B cell (primary cell): ENCODE measurements at regions of chr2 and their contacts with region 1.

Region 1: GRCh38 chr2:237572021-237572741 is 5.8 kb downstream of the PRLH start:
- DNase-seq: peak; percentile 87
- ATAC-seq: peak; percentile 93
- H3K4me3 ChIP-seq: no peak overlapping the region
- H3K4me3 Mint-ChIP-seq: no peak overlapping the region
- H3K27ac ChIP-seq: no peak overlapping the region
- H3K27ac Mint-ChIP-seq: no peak overlapping the region
- H3K4me1 ChIP-seq: peaks cover 0 to 7% of the 10 kb centered on the region in 2 donors
- H3K4me1 Mint-ChIP-seq: peaks cover 6% of the 10 kb centered on the region
- H3K27me3 ChIP-seq: peaks cover 0 to 14% (median 2%) of the 10 kb centered on the region in 4 experiments
- H3K27me3 Mint-ChIP-seq: peaks cover 36% of the 10 kb centered on the region
- CTCF ChIP-seq: peak; percentile 98

Region 2: DNA sequence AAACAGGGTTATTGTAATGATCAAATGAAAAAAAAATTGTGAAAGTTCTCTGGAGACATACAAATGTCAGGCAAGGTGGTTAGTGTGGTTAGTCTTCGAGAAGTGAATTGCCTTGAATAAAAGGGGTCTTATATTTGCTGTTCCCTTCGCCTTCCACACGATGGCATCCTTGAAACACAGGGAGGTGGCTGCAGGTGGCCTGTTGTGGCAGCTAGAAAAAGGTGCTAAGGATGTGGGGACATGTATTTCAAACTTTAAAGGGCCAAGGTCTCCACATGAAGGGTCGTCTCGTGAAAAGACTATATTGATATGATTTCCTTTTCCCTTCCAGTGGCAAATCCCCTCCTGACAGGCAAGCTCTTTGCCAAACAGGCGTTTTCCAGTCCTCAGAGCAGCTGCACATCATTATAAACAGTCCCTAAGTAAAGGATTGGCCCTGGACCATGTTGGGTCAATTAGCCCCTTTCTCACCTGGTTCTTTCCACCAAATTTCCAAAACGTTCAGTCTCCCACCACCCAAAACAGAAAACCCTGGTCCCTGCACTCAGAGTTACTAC is 418.0 kb before region 1 on chr2:
- CTCF ChIA-PET with region 1: interaction called, 10 read pairs
- POLR2A ChIA-PET with region 1: no interaction called
- intact Hi-C with region 1: no loop called
- DNase-seq: peak; percentile 35
- ATAC-seq: no peak
- H3K4me3 ChIP-seq: no peak overlapping the region
- H3K4me3 Mint-ChIP-seq: no peak overlapping the region
- H3K27ac ChIP-seq: no peak overlapping the region
- H3K27ac Mint-ChIP-seq: no peak overlapping the region
- H3K4me1 ChIP-seq: no peaks in the 10 kb centered on the region
- H3K4me1 Mint-ChIP-seq: peaks cover under 1% of the 10 kb centered on the region
- H3K27me3 ChIP-seq: no peaks in the 10 kb centered on the region
- H3K27me3 Mint-ChIP-seq: peaks cover 13% of the 10 kb centered on the region
- CTCF ChIP-seq: peak; percentile 57

Region 3: GRCh38 chr2:237474931-237475703 is 97.1 kb before region 1 on chr2:
- CTCF ChIA-PET with region 1: interaction called, 7 read pairs
- POLR2A ChIA-PET with region 1: no interaction called
- intact Hi-C with region 1: loop called (anchors 1 kb)
- DNase-seq: peak; percentile 84
- ATAC-seq: peak; percentile 88
- H3K4me3 ChIP-seq: peak overlapping the region; percentile 12 to 91 (median 71)
- H3K4me3 Mint-ChIP-seq: peak overlapping the region; percentile 87
- H3K27ac ChIP-seq: peak overlapping the region; percentile 47 to 80
- H3K27ac Mint-ChIP-seq: peak overlapping the region; percentile 82
- H3K4me1 ChIP-seq: peaks cover 11 to 15% of the 10 kb centered on the region in 2 donors
- H3K4me1 Mint-ChIP-seq: peaks cover 11% of the 10 kb centered on the region
- H3K27me3 ChIP-seq: peaks cover 0 to 21% (median 15%) of the 10 kb centered on the region in 4 experiments
- H3K27me3 Mint-ChIP-seq: peaks cover 32% of the 10 kb centered on the region
- CTCF ChIP-seq: peak; percentile 92

Region 4: GRCh38 chr2:237556773-237557632 is 15.2 kb before region 1 on chr2:
- CTCF ChIA-PET with region 1: interaction called, 19 read pairs
- POLR2A ChIA-PET with region 1: no interaction called
- intact Hi-C with region 1: no loop called
- DNase-seq: no peak
- ATAC-seq: no peak
- H3K4me3 ChIP-seq: no peak overlapping the region
- H3K4me3 Mint-ChIP-seq: no peak overlapping the region
- H3K27ac ChIP-seq: no peak overlapping the region
- H3K27ac Mint-ChIP-seq: no peak overlapping the region
- H3K4me1 ChIP-seq: no peaks in the 10 kb centered on the region
- H3K4me1 Mint-ChIP-seq: no peaks in the 10 kb centered on the region
- H3K27me3 ChIP-seq: peaks cover 0 to 9% (median 0%) of the 10 kb centered on the region in 4 experiments
- H3K27me3 Mint-ChIP-seq: peaks cover 34% of the 10 kb centered on the region
- CTCF ChIP-seq: no peak

Region 5: GRCh38 chr2:237603718-237604362 is 31.7 kb after region 1 on chr2:
- CTCF ChIA-PET with region 1: interaction called, 20 read pairs
- POLR2A ChIA-PET with region 1: no interaction called
- intact Hi-C with region 1: no loop called
- DNase-seq: peak; percentile 87
- ATAC-seq: peak; percentile 96
- H3K4me3 ChIP-seq: peak overlapping the region in 4 of 5 experiments; percentile 20 to 41 (median 39)
- H3K4me3 Mint-ChIP-seq: peak overlapping the region; percentile 81
- H3K27ac ChIP-seq: peak overlapping the region; percentile 75 to 90
- H3K27ac Mint-ChIP-seq: peak overlapping the region; percentile 90
- H3K4me1 ChIP-seq: peaks cover 19 to 21% of the 10 kb centered on the region in 2 donors
- H3K4me1 Mint-ChIP-seq: peaks cover 26% of the 10 kb centered on the region
- H3K27me3 ChIP-seq: no peaks in the 10 kb centered on the region
- H3K27me3 Mint-ChIP-seq: no peaks in the 10 kb centered on the region
- CTCF ChIP-seq: no peak

Region 6: GRCh38 chr2:237691908-237692600 is 119.9 kb after region 1 on chr2:
- CTCF ChIA-PET with region 1: interaction called, 10 read pairs
- POLR2A ChIA-PET with region 1: no interaction called
- intact Hi-C with region 1: no loop called
- DNase-seq: peak; percentile 94
- ATAC-seq: peak; percentile 66
- H3K4me3 ChIP-seq: peak overlapping the region; percentile 87 to 94 (median 92)
- H3K4me3 Mint-ChIP-seq: peak overlapping the region; percentile 91
- H3K27ac ChIP-seq: peak overlapping the region; percentile 94 to 95
- H3K27ac Mint-ChIP-seq: peak overlapping the region; percentile 87
- H3K4me1 ChIP-seq: peaks cover 70 to 79% of the 10 kb centered on the region in 2 donors
- H3K4me1 Mint-ChIP-seq: peaks cover 78% of the 10 kb centered on the region
- H3K27me3 ChIP-seq: no peaks in the 10 kb centered on the region
- H3K27me3 Mint-ChIP-seq: no peaks in the 10 kb centered on the region
- CTCF ChIP-seq: no peak